Colonic mucosa (tissue), 4 donors: ENCODE measurements at regions of chr4 and their contacts with region 1.

Region 1: GRCh38 chr4:91113130-91113706 is 986.0 kb downstream of the CCSER1 start:
- DNase-seq: no peak
- H3K4me3 ChIP-seq: no peak overlapping the region
- H3K27ac ChIP-seq: no peak overlapping the region
- H3K4me1 ChIP-seq: no peaks in the 10 kb centered on the region
- H3K27me3 ChIP-seq: no peaks in the 10 kb centered on the region
- CTCF ChIP-seq: peak; percentile 37

Region 2: GRCh38 chr4:90419124-90419711 is 694.0 kb before region 1 on chr4:
- intact Hi-C with region 1: loop called (anchors 10 kb)
- DNase-seq: no peak
- H3K4me3 ChIP-seq: no peak overlapping the region
- H3K27ac ChIP-seq: no peak overlapping the region
- H3K4me1 ChIP-seq: no peaks in the 10 kb centered on the region
- H3K27me3 ChIP-seq: no peaks in the 10 kb centered on the region
- CTCF ChIP-seq: peak; percentile 43

Region 3: GRCh38 chr4:91198951-91199350 is 85.7 kb after region 1 on chr4:
- intact Hi-C with region 1: no loop called
- DNase-seq: no peak
- H3K4me3 ChIP-seq: no peak overlapping the region
- H3K27ac ChIP-seq: no peak overlapping the region
- H3K4me1 ChIP-seq: no peaks in the 10 kb centered on the region
- H3K27me3 ChIP-seq: no peaks in the 10 kb centered on the region
- CTCF ChIP-seq: no peak